WTC11 (cell line): ENCODE measurements at regions of chr6 and their contacts with region 1.

Region 1: DNA sequence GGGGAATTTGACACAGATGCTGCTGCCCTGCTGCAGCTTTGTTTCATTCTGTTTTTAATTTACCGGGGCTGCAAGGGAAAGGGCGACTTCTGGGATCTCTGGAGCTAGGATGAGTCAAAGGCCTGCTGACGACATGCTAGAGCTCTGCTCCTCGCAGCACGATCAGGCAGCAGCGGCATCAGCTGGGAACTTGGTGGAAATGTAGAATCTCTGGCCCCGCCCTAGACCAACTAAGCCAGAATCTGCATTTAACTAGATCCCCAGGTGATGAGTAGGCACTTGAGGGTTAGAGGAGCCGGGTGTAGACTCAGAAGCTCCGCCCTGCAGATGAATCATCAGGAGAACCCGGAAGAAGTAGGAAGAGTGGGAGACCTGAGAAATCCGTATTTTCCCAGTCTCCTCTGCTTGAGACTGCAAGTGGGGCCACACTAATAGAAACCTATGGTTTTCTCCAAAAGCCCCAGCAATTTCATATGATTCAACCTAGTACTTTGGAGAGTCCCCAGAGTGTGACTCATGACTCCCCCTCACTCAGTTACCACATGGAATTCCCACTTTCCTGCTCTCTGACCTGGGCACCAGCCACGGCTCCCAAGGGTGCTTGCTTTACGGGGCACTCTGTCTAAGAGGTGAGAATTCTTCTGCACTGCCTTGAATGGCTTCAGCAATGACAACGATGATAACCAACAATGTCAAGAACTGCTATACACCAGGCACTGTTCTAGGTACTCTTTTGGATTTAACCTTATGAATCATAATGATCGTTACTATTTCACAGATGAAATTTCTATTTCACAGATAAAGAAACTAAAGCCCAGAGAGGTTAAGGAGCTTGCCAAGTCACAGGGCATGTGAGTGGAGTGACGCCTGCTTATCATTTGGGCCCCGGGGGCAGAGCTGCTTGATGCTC is 18.1 kb downstream of the TUBB2B start:
- DNase-seq: peak; percentile 79
- ATAC-seq: peak; percentile 98
- H3K4me3 Mint-ChIP-seq: peak overlapping the region; percentile 40
- H3K27ac Mint-ChIP-seq: peak overlapping the region; percentile 80
- H3K4me1 Mint-ChIP-seq: peaks cover 27% of the 10 kb centered on the region
- H3K27me3 Mint-ChIP-seq: no peaks in the 10 kb centered on the region
- CTCF ChIP-seq: no peak

Region 2: GRCh38 chr6:3108746-3109414 is 100.5 kb before region 1 on chr6:
- CTCF ChIA-PET with region 1: no interaction called
- POLR2A ChIA-PET with region 1: no interaction called
- DNase-seq: no peak
- ATAC-seq: no peak
- H3K4me3 Mint-ChIP-seq: no peak overlapping the region
- H3K27ac Mint-ChIP-seq: peak overlapping the region; percentile 89
- H3K4me1 Mint-ChIP-seq: no peaks in the 10 kb centered on the region
- H3K27me3 Mint-ChIP-seq: no peaks in the 10 kb centered on the region
- CTCF ChIP-seq: no peak

Region 3: DNA sequence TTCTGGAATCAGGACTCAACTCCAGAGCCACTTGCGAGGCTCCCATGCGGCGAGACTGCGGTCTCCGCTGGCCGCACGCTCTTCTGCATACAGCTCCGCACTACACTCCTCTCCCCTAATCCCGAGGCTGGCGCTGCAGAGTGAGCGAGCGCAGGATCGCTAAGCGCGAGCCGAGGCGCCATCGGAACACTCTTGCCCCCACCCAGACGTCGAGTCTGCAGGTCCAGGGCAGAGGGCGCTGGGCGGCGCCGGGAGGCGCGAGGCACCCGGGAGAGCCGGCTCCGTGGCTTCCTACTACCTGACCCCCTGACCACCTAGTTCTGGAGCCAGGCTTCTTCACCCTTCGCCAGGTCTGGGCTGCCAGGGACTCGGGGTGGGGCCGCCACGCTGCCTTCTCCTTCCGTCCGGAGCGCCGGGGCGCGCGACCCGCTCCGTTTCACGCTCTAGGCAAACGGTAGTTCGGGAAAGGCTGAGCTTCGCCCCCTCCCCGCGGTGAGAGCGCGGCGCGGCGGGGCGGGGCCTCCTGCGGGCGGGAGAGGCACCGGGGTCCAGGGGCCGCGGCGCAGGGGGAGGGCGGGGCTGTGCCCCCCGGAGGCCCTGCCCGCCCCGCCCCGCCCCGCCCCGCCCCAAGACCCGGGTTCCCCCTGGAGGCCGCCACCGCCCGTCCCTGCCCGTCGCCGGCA is 46.7 kb before region 1 on chr6:
- CTCF ChIA-PET with region 1: interaction called, 17 read pairs
- POLR2A ChIA-PET with region 1: interaction called, 6 read pairs
- DNase-seq: peak; percentile 76
- ATAC-seq: peak; percentile 28
- H3K4me3 Mint-ChIP-seq: peak overlapping the region; percentile 84
- H3K27ac Mint-ChIP-seq: peak overlapping the region; percentile 94
- H3K4me1 Mint-ChIP-seq: peaks cover 44% of the 10 kb centered on the region
- H3K27me3 Mint-ChIP-seq: no peaks in the 10 kb centered on the region
- CTCF ChIP-seq: no peak